Sigmoid colon (tissue), 7 donors: ENCODE measurements at regions of chr20 and their contacts with region 1.

Region 1: GRCh38 chr20:3753098-3753980 is 14.2 kb downstream of the ADISSP start:
- DNase-seq: peak; percentile 85
- H3K4me3 ChIP-seq: no peak overlapping the region
- H3K27ac ChIP-seq: peak overlapping the region in 2 of 4 donors; percentile 21 to 48
- H3K4me1 ChIP-seq: peaks cover 0 to 21% (median 8%) of the 10 kb centered on the region in 4 donors
- H3K27me3 ChIP-seq: peaks cover 0 to 11% (median 0%) of the 10 kb centered on the region in 3 donors
- CTCF ChIP-seq: peak; percentile 55 to 79 (median 74)
- EP300 ChIP-seq: no peak
- POLR2A ChIP-seq: no peak

Region 2: GRCh38 chr20:3820048-3820900 is 66.9 kb after region 1 on chr20 and contains the start of gene AP5S1:
- intact Hi-C with region 1: loop called (anchors 2 kb)
- DNase-seq: peak; percentile 99
- H3K4me3 ChIP-seq: peak within 1 kb of the TSS; percentile 63 to 83 (median 77)
- H3K27ac ChIP-seq: peak within 1 kb of the TSS; percentile 95 to 98 (median 97)
- H3K4me1 ChIP-seq: peaks cover 0 to 29% (median 25%) of the 10 kb centered on the region in 4 donors
- H3K27me3 ChIP-seq: no peaks in the 10 kb centered on the region
- CTCF ChIP-seq: peak; percentile 99 to 100 (median 99)
- EP300 ChIP-seq: peak in 1 of 4 donors; percentile 75
- POLR2A ChIP-seq: peak; percentile 71
- total RNA-seq, gene AP5S1: 5.4 to 11.8 (median 7.3) TPM